K562 (cell line): ENCODE measurements at regions of chr9 and their contacts with region 1.

Region 1: GRCh38 chr9:122389799-122390481 is 19.1 kb downstream of the PTGS1 start:
- DNase-seq: no peak
- ATAC-seq: no peak
- H3K4me3 ChIP-seq: no peak overlapping the region
- H3K27ac ChIP-seq: no peak overlapping the region
- H3K4me1 ChIP-seq: no peaks in the 10 kb centered on the region
- H3K27me3 ChIP-seq: peaks cover 0 to 6% of the 10 kb centered on the region in 2 experiments; a peak in 3 of 5 replicates
- CTCF ChIP-seq: no peak
- EP300 ChIP-seq: no peak
- POLR2A ChIP-seq: no peak
- RAD21 ChIP-seq: no peak

Region 2: DNA sequence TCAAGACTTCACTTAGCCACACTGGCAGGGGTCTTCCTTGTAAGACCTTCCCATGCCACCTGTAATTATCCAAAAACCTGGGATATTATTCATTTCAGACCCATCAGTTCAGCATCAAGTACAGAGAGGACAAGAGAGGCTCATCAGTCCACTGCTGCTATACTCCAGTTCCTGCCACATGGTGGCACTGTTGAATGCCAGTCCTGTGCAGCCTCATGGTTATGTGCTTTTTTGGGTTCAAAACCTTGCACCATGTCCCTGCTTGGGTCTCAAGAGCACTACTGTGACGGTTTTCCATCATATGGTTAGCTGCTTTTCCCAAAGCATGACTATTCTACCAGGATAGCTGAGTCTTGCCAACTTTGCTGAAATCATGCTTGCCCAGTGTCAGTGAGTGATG is 10.6 kb before region 1 on chr9:
- CTCF ChIA-PET with region 1: no interaction called
- POLR2A ChIA-PET with region 1: interaction called, 12 read pairs
- in situ Hi-C with region 1: no loop called
- intact Hi-C with region 1: no loop called
- DNase-seq: peak in 3 of 4 experiments; percentile 30 to 43 (median 43)
- ATAC-seq: no peak
- H3K4me3 ChIP-seq: no peak overlapping the region
- H3K27ac ChIP-seq: no peak overlapping the region
- H3K4me1 ChIP-seq: peaks cover 46 to 47% of the 10 kb centered on the region in 2 experiments
- H3K27me3 ChIP-seq: no peaks in the 10 kb centered on the region
- CTCF ChIP-seq: peak; percentile 48 to 65 (median 60)
- EP300 ChIP-seq: no peak
- POLR2A ChIP-seq: no peak
- RAD21 ChIP-seq: peak in 1 of 2 experiments; percentile 53; a peak in 3 of 4 replicates